Colonic mucosa (tissue), 4 donors: ENCODE measurements at regions of chrX and their contacts with region 1.

Region 1: DNA sequence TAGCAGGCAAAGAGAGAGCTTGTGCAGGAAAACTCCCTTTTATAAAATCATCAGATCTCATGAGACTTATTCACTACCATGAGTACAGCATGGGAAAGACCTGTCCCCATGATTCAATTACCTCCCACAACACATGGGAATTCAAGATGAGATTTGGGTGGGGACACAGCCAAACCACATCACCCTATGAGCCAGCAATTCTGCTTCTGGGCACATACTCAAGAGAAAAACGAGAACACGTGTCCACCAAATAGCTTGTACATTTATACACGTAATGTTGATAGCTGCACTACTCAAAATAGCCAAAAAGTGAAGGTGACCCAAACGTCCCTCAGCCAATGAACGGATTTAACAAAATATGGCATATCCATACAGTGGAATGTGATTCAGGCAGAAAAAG is 94.5 kb upstream of the DHRSX start:
- DNase-seq: no peak
- H3K4me3 ChIP-seq: no peak overlapping the region
- H3K27ac ChIP-seq: no peak overlapping the region
- H3K4me1 ChIP-seq: no peaks in the 10 kb centered on the region
- H3K27me3 ChIP-seq: no peaks in the 10 kb centered on the region
- CTCF ChIP-seq: no peak

Region 2: DNA sequence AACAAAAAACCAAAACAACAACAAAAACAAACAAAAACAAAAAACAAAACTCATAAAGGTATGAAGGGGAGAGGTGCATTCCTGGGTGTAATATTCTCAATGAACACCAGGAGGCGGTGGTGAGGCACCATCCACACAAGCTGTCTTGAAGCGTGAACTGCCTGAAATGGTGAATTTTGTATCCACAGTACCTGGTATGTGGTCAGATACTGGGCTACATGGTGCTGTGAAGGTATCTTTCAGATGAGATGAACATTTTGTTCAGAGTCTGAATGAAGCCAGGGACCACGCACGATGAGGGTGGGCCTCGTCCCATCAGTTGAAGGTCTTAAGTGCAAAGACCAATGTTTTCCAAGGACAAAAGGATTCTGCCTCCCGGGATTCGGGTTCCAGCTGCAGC is 921.9 kb before region 1 on chrX:
- intact Hi-C with region 1: loop called (anchors 2 kb)
- DNase-seq: peak; percentile 30
- H3K4me3 ChIP-seq: no peak overlapping the region
- H3K27ac ChIP-seq: no peak overlapping the region
- H3K4me1 ChIP-seq: no peaks in the 10 kb centered on the region
- H3K27me3 ChIP-seq: no peaks in the 10 kb centered on the region
- CTCF ChIP-seq: peak; percentile 72